ENCODE measurements at regions of chr10 and their contacts with region 1.

Region 1: DNA sequence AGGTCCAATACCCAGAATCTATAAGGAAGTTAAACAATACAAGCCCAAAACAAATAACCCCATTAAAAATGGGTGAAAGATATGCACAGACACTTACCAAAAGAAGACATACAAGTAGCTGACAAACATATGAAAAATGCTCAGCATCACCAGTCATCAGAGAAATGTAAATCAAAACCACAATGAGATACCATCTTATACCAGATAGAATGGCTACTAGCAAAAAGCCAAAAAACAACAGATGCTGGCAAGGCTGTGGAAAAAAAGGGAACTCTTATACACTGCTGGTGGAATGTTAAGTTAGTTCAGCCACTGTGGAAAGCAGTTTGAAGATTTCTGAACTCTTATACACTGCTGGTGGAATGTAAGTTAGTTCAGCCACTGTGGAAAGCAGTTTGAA is 331.1 kb downstream of the KIF20B start:
- DNase-seq: no peak
- ATAC-seq: no peak
- H3K4me3 ChIP-seq: no peak overlapping the region
- H3K27ac ChIP-seq: no peak overlapping the region
- H3K4me1 ChIP-seq: no peaks in the 10 kb centered on the region
- H3K27me3 ChIP-seq: no peaks in the 10 kb centered on the region

Region 2: DNA sequence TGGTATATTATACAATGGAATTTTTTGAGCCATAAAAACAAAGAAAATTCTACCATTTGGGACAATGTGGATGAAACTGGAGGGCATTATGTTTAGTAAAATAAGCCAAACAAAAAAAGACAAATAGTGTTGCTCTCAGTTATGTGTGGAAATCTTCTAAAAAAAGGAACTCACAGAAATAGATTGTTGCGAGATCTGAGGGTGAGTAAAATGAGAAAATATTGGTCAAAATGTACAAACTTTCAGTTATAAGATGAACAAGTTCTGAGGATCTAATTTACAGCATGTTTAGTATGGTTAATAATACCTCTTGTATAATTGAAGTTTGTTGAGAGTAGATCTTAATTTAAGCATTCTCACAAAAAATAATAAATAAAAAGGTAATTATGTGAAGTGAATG is 39.9 kb before region 1 on chr10:
- intact Hi-C with region 1: no loop called
- DNase-seq: no peak
- ATAC-seq: no peak
- H3K4me3 ChIP-seq: no peak overlapping the region
- H3K27ac ChIP-seq: no peak overlapping the region
- H3K4me1 ChIP-seq: no peaks in the 10 kb centered on the region
- H3K27me3 ChIP-seq: no peaks in the 10 kb centered on the region

Region 3: GRCh38 chr10:90062786-90063185 is 30.3 kb after region 1 on chr10:
- intact Hi-C with region 1: loop called in 1 of 2 experiments (anchors 1 kb)
- DNase-seq: no peak
- ATAC-seq: no peak
- H3K4me3 ChIP-seq: no peak overlapping the region
- H3K27ac ChIP-seq: no peak overlapping the region
- H3K4me1 ChIP-seq: peaks cover 0 to 9% of the 10 kb centered on the region in 2 donors
- H3K27me3 ChIP-seq: no peaks in the 10 kb centered on the region